ENCODE measurements at regions of chr10 and their contacts with region 1.

Region 1: DNA sequence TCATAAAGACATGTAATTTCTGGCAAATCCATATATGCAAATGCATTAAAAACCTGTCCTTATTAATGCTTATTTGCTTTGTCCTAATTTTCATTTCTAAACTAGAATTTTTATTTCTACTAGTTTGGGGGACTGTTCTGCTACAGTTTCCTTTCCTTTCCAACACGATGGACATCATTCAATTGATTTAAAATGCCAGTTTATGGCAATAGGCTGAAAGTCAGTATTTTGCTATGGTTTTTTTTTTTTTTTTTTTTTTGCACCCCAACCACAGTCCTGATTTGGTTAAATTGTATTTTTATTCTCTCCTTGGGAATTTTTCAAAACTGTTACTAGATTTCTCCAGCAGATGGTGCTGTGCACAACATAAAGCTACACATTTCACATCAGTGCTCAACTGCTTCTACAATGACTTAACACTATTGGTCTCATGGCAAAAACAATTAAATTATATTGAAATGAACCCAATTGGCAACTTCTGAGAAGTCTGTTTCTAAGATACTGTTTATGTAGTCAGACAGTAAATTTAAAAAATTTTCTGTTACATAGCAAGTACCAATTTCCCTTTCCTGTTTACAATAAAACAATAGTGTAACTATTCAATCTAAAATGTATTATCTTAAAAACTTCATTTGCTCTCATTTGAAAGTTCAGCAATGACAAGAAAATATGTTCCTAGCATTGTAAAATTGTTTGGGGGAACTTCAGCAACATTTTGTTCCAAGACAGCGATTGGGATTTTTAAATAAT is 193.8 kb upstream of the CCDC6 start:
- DNase-seq: peak in 1 of 2 experiments; percentile 73
- H3K4me3 ChIP-seq: no peak overlapping the region
- H3K4me3 Mint-ChIP-seq: no peak overlapping the region
- H3K27ac Mint-ChIP-seq: no peak overlapping the region
- H3K4me1 ChIP-seq: peaks cover 7% of the 10 kb centered on the region; the same call in 1 of the 2 replicates
- H3K4me1 Mint-ChIP-seq: peaks cover 10% of the 10 kb centered on the region
- H3K27me3 ChIP-seq: no peaks in the 10 kb centered on the region
- H3K27me3 Mint-ChIP-seq: no peaks in the 10 kb centered on the region
- CTCF ChIP-seq: peak; percentile 78 to 81

Region 2: DNA sequence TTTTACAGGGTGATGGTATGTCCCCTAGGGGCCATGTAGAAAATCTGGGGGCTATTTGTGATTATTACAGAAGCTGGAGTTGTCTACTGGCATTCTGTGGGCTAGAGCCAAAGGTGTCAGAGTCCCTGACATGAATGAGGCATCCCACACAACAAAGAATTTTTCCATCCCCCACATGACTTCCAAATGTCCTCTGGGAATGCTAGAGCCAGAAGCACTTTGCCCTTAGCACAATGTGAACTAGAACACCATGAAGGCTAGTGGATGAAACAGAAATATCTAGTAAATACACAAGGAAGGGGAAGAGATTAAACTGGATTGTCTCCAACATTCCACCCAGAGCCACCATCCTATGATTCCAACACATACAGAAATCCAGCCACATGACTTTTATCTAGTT is 784.7 kb before region 1 on chr10:
- CTCF ChIA-PET with region 1: no interaction called
- POLR2A ChIA-PET with region 1: no interaction called
- intact Hi-C with region 1: no loop called
- DNase-seq: no peak
- H3K4me3 ChIP-seq: no peak overlapping the region
- H3K4me3 Mint-ChIP-seq: no peak overlapping the region
- H3K27ac Mint-ChIP-seq: no peak overlapping the region
- H3K4me1 ChIP-seq: no peaks in the 10 kb centered on the region
- H3K4me1 Mint-ChIP-seq: no peaks in the 10 kb centered on the region
- H3K27me3 ChIP-seq: no peaks in the 10 kb centered on the region
- H3K27me3 Mint-ChIP-seq: no peaks in the 10 kb centered on the region
- CTCF ChIP-seq: no peak

Region 3: GRCh38 chr10:59448616-59449015 is 651.6 kb before region 1 on chr10:
- CTCF ChIA-PET with region 1: no interaction called
- POLR2A ChIA-PET with region 1: no interaction called
- intact Hi-C with region 1: no loop called
- DNase-seq: no peak
- H3K4me3 ChIP-seq: no peak overlapping the region
- H3K4me3 Mint-ChIP-seq: no peak overlapping the region
- H3K27ac Mint-ChIP-seq: no peak overlapping the region
- H3K4me1 ChIP-seq: no peaks in the 10 kb centered on the region
- H3K4me1 Mint-ChIP-seq: no peaks in the 10 kb centered on the region
- H3K27me3 ChIP-seq: no peaks in the 10 kb centered on the region
- H3K27me3 Mint-ChIP-seq: peaks cover 14% of the 10 kb centered on the region
- CTCF ChIP-seq: no peak

Region 4: GRCh38 chr10:60114765-60115586 is 14.8 kb after region 1 on chr10:
- CTCF ChIA-PET with region 1: interaction called, 12 read pairs
- POLR2A ChIA-PET with region 1: no interaction called
- intact Hi-C with region 1: loop called (anchors 1 kb)
- DNase-seq: peak in 1 of 2 experiments; percentile 77
- H3K4me3 ChIP-seq: no peak overlapping the region
- H3K4me3 Mint-ChIP-seq: no peak overlapping the region
- H3K27ac Mint-ChIP-seq: no peak overlapping the region
- H3K4me1 ChIP-seq: no peaks in the 10 kb centered on the region
- H3K4me1 Mint-ChIP-seq: no peaks in the 10 kb centered on the region
- H3K27me3 ChIP-seq: no peaks in the 10 kb centered on the region
- H3K27me3 Mint-ChIP-seq: no peaks in the 10 kb centered on the region
- CTCF ChIP-seq: peak; percentile 85 to 86

Region 5: DNA sequence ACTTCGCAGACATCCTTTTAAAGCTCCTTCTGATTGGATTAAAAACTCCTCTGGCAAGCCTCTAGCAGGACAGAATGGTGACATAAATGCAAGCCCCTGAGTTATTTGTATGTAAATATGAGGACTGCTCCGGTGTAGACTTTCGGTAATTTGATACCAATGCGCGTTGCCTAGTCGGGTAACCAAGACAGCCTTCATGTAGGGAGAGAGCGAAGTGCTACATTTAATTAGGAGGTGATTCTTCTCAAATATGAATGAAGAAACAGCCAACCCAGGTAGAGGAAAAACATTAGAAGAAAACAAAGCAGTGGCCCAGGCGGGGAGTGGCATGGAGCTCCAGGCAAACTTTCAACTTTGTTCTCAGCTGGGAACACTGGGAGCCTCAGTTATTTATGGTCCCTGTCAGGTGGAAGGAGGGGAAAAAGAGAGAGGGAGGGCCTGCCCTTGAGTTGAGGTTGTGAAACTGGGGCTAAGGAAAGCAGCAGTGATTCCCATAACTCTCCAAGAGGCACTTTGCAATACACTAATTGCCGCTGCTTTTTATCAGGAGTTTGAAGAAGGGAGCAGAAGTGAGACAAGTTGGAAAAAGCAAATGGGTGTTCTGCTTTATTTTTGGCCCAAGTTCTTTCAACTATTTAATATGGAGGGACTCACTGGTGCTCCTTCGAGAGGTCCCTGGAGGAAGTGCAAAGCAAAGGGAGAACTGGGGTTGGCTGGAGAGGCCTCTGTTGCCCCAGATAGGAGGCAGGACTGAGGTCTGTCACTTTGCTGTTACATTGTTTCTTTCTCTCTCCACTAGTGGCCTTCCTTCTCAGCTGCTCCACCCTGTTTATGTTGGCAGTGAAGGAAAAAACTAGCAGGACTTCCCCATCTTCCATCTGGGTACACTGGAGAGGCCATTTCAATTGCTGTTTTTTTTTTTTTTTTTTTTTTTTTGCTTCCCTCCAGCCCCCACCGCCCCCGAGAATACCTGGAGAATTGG is 40.8 kb after region 1 on chr10:
- CTCF ChIA-PET with region 1: no interaction called
- POLR2A ChIA-PET with region 1: no interaction called
- intact Hi-C with region 1: loop called (anchors 1 kb)
- DNase-seq: peak; percentile 81 to 83
- H3K4me3 ChIP-seq: peak overlapping the region; percentile 38
- H3K4me3 Mint-ChIP-seq: no peak overlapping the region
- H3K27ac Mint-ChIP-seq: no peak overlapping the region
- H3K4me1 ChIP-seq: peaks cover 61% of the 10 kb centered on the region
- H3K4me1 Mint-ChIP-seq: peaks cover 13% of the 10 kb centered on the region
- H3K27me3 ChIP-seq: no peaks in the 10 kb centered on the region
- H3K27me3 Mint-ChIP-seq: no peaks in the 10 kb centered on the region
- CTCF ChIP-seq: peak in 1 of 2 experiments; percentile 0

Region 6: DNA sequence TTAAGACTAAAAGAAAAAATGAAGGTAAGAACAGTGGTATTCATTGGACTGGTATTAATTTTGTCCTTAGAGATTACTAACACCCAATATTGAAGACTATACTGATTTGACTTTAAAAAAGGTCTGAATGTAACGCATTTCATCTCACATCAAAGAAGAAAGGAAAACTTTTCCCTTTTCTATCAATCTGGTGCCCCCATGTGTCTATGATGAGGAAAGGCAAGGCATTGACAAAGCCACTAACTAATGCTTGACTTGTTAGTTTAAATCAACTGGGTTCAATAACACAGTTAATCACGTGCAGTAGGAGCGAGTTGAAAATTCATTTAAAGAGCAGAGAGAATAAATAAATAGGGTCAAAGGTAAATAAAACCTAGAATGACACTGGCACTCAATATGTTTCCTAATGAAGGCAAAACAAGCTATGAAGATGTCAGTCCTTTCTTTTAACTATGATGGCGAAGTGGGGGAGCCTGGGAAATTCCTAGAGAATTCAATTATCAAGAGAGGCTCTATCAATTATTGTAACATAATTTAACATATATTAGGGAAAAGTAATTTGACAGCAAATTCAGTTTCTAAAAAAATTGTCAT is 108.6 kb after region 1 on chr10:
- CTCF ChIA-PET with region 1: interaction called, 24 read pairs
- POLR2A ChIA-PET with region 1: no interaction called
- intact Hi-C with region 1: loop called (anchors 1 kb)
- DNase-seq: peak in 1 of 2 experiments; percentile 63
- H3K4me3 ChIP-seq: no peak overlapping the region
- H3K4me3 Mint-ChIP-seq: no peak overlapping the region
- H3K27ac Mint-ChIP-seq: no peak overlapping the region
- H3K4me1 ChIP-seq: peaks cover 10% of the 10 kb centered on the region; the same call in 1 of the 2 replicates
- H3K4me1 Mint-ChIP-seq: peaks cover 24% of the 10 kb centered on the region
- H3K27me3 ChIP-seq: no peaks in the 10 kb centered on the region
- H3K27me3 Mint-ChIP-seq: no peaks in the 10 kb centered on the region
- CTCF ChIP-seq: peak; percentile 96

Region 7: DNA sequence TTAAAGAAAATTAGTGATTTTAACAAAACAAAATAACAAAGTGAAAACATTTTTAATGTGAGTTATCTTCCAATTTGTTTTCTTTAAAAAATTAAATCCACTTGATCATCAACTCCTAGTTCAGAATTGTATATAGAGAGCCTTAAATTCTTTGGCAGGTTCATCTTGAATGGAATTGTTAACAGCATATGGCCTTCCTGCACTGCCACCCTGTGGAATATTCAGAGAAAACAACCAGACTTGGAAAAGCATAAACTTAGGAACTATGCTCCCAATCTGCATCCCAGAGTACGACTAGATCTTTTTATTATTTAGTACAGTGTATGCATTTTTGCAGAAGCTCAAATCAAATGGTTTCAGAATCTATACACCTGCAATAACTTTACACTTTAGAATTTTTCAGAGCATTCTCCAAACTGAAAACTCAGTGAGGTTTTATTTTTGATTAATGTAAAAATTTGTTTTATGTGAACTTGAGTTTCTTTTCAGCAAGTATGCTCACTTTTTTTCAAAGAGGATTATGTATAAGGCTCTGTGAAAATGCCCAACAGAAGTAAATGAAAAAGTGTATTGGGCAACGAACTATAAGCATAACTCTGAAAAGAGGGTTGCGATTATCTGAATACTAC is 334.4 kb after region 1 on chr10:
- CTCF ChIA-PET with region 1: interaction called, 4 read pairs
- POLR2A ChIA-PET with region 1: no interaction called
- intact Hi-C with region 1: loop called (anchors 1 kb)
- DNase-seq: peak; percentile 55 to 76
- H3K4me3 ChIP-seq: no peak overlapping the region
- H3K4me3 Mint-ChIP-seq: no peak overlapping the region
- H3K27ac Mint-ChIP-seq: no peak overlapping the region
- H3K4me1 ChIP-seq: no peaks in the 10 kb centered on the region
- H3K4me1 Mint-ChIP-seq: no peaks in the 10 kb centered on the region
- H3K27me3 ChIP-seq: no peaks in the 10 kb centered on the region
- H3K27me3 Mint-ChIP-seq: no peaks in the 10 kb centered on the region
- CTCF ChIP-seq: peak; percentile 84 to 90

Measured in Caco-2 (cell line).